B cell (primary cell): ENCODE measurements at regions of chr11 and their contacts with region 1.

Region 1: GRCh38 chr11:66081505-66081904 is 11.4 kb downstream of the PACS1 start:
- DNase-seq: peak; percentile 89
- ATAC-seq: peak; percentile 92
- H3K4me3 ChIP-seq: peak overlapping the region in 4 of 5 experiments; percentile 27 to 60 (median 42)
- H3K4me3 Mint-ChIP-seq: peak overlapping the region; percentile 80
- H3K27ac ChIP-seq: peak overlapping the region; percentile 76 to 93
- H3K27ac Mint-ChIP-seq: peak overlapping the region; percentile 95
- H3K4me1 ChIP-seq: peaks cover 84 to 91% of the 10 kb centered on the region in 2 donors
- H3K4me1 Mint-ChIP-seq: peaks cover 92% of the 10 kb centered on the region
- H3K27me3 ChIP-seq: no peaks in the 10 kb centered on the region
- H3K27me3 Mint-ChIP-seq: no peaks in the 10 kb centered on the region
- CTCF ChIP-seq: no peak

Region 2: GRCh38 chr11:66100272-66101065 is 19.0 kb after region 1 on chr11:
- CTCF ChIA-PET with region 1: interaction called, 4 read pairs
- POLR2A ChIA-PET with region 1: interaction called, 3 read pairs
- intact Hi-C with region 1: loop called (anchors 2 kb)
- DNase-seq: peak; percentile 77
- ATAC-seq: peak; percentile 90
- H3K4me3 ChIP-seq: peak overlapping the region in 4 of 5 experiments; percentile 30 to 55 (median 40)
- H3K4me3 Mint-ChIP-seq: peak overlapping the region; percentile 72
- H3K27ac ChIP-seq: peak overlapping the region; percentile 60 to 72
- H3K27ac Mint-ChIP-seq: peak overlapping the region; percentile 85
- H3K4me1 ChIP-seq: peaks cover 54 to 55% of the 10 kb centered on the region in 2 donors
- H3K4me1 Mint-ChIP-seq: peaks cover 65% of the 10 kb centered on the region
- H3K27me3 ChIP-seq: no peaks in the 10 kb centered on the region
- H3K27me3 Mint-ChIP-seq: no peaks in the 10 kb centered on the region
- CTCF ChIP-seq: no peak

Region 3: GRCh38 chr11:66112601-66113098 is 31.1 kb after region 1 on chr11:
- CTCF ChIA-PET with region 1: interaction called, 12 read pairs
- POLR2A ChIA-PET with region 1: interaction called, 11 read pairs
- intact Hi-C with region 1: loop called (anchors 1 kb)
- DNase-seq: peak; percentile 61
- ATAC-seq: peak; percentile 56
- H3K4me3 ChIP-seq: peak overlapping the region in 1 of 5 experiments; percentile 20
- H3K4me3 Mint-ChIP-seq: peak overlapping the region; percentile 83
- H3K27ac ChIP-seq: peak overlapping the region; percentile 59 to 70
- H3K27ac Mint-ChIP-seq: peak overlapping the region; percentile 93
- H3K4me1 ChIP-seq: peaks cover 94% of the 10 kb centered on the region in 2 donors
- H3K4me1 Mint-ChIP-seq: peaks cover 87% of the 10 kb centered on the region
- H3K27me3 ChIP-seq: no peaks in the 10 kb centered on the region
- H3K27me3 Mint-ChIP-seq: no peaks in the 10 kb centered on the region
- CTCF ChIP-seq: no peak

Region 4: GRCh38 chr11:66126808-66127555 is 45.5 kb after region 1 on chr11:
- CTCF ChIA-PET with region 1: interaction called, 17 read pairs
- POLR2A ChIA-PET with region 1: interaction called, 7 read pairs
- intact Hi-C with region 1: loop called (anchors 2 kb)
- DNase-seq: peak; percentile 81
- ATAC-seq: peak; percentile 80
- H3K4me3 ChIP-seq: peak overlapping the region in 3 of 5 experiments; percentile 10 to 53 (median 27)
- H3K4me3 Mint-ChIP-seq: peak overlapping the region; percentile 90
- H3K27ac ChIP-seq: peak overlapping the region; percentile 76 to 87
- H3K27ac Mint-ChIP-seq: peak overlapping the region; percentile 98
- H3K4me1 ChIP-seq: peaks cover 57 to 73% of the 10 kb centered on the region in 2 donors
- H3K4me1 Mint-ChIP-seq: peaks cover 81% of the 10 kb centered on the region
- H3K27me3 ChIP-seq: no peaks in the 10 kb centered on the region
- H3K27me3 Mint-ChIP-seq: no peaks in the 10 kb centered on the region
- CTCF ChIP-seq: no peak

Region 5: GRCh38 chr11:66136752-66137123 is 55.2 kb after region 1 on chr11:
- CTCF ChIA-PET with region 1: interaction called, 35 read pairs
- POLR2A ChIA-PET with region 1: interaction called, 8 read pairs
- intact Hi-C with region 1: no loop called
- DNase-seq: no peak
- ATAC-seq: no peak
- H3K4me3 ChIP-seq: no peak overlapping the region
- H3K4me3 Mint-ChIP-seq: no peak overlapping the region
- H3K27ac ChIP-seq: peak overlapping the region in 1 of 2 donors; percentile 57
- H3K27ac Mint-ChIP-seq: peak overlapping the region; percentile 65
- H3K4me1 ChIP-seq: peaks cover 44 to 50% of the 10 kb centered on the region in 2 donors
- H3K4me1 Mint-ChIP-seq: peaks cover 75% of the 10 kb centered on the region
- H3K27me3 ChIP-seq: no peaks in the 10 kb centered on the region
- H3K27me3 Mint-ChIP-seq: no peaks in the 10 kb centered on the region
- CTCF ChIP-seq: no peak